PC-3 (cell line): ENCODE measurements at regions of chr18 and their contacts with region 1.

Region 1: GRCh38 chr18:11561293-11561692 is 48.1 kb upstream of the SLC35G4 start:
- DNase-seq: no peak
- ATAC-seq: no peak
- H3K4me3 ChIP-seq: no peak overlapping the region
- H3K27ac ChIP-seq: no peak overlapping the region
- H3K4me1 ChIP-seq: no peaks in the 10 kb centered on the region
- H3K27me3 ChIP-seq: peaks cover 85% of the 10 kb centered on the region
- CTCF ChIP-seq: no peak

Region 2: DNA sequence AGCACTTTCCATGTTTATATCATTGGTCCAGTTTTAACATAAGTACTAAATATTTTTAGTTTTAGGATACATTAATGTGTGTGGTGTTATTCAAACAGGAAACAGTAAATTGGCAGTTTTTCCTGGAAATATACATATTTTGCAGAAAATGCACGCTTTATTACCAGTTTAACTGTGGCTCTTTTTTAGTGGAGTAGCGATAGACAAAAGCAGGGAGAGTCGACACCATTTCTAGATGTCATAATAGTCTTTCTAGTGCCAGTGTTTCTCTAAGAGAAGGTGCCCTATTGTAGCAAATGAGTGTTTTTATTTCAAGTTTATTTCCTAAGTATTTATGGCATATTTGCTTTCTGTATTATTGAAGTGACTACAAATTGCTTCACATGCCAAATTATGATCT is 39.0 kb after region 1 on chr18:
- CTCF ChIA-PET with region 1: no interaction called
- POLR2A ChIA-PET with region 1: interaction called, 11 read pairs
- intact Hi-C with region 1: no loop called
- DNase-seq: no peak
- ATAC-seq: no peak
- H3K4me3 ChIP-seq: no peak overlapping the region
- H3K27ac ChIP-seq: no peak overlapping the region
- H3K4me1 ChIP-seq: no peaks in the 10 kb centered on the region
- H3K27me3 ChIP-seq: peaks cover 58% of the 10 kb centered on the region
- CTCF ChIP-seq: no peak